ENCODE measurements at regions of chr1 and their contacts with region 1.

Region 1: DNA sequence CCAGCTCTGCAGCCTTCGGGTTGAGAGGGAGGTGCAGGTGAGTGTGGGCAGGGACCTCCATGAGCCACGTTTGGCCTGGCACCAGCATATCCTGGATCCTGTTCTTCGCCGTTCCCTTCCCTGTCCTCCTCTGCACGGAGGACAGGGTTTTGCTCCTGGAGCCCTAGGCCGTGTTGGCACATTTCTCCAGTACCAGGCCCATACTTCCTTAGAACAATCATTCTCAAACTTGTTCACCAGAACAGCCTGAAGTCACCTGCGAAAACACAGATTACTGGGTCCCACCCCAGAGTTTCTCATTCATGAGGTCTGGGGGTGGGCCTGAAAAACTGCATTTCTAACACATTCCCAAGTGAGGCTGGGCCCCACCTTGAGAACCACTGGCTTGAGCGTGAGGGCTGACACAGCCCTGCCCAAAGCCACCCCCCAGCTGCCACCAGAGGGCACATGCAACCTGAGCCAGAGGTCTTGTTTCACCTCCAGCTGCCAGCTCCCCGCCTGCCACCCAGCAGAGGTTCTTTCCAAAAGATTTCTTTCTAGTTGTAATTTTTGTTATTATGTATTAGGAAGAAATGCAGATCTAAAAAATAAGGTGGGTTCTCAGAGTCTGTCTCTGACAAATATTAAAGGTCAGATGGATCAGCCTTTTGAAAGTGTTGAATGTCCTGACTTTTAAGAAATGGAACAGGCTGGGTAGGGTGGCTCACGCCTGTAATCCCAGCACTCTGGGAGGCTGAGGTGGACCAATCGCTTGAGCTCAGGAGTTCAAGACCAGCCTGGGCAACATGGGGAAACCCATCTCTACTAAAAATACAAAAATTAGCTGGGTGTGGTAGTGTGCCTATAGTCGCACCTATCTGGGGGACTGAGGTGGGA is 39.6 kb upstream of the LDLRAP1 start:
- DNase-seq: peak; percentile 30 to 53
- ATAC-seq: peak; percentile 91 to 95
- H3K4me3 ChIP-seq: no peak overlapping the region
- H3K27ac ChIP-seq: no peak overlapping the region
- H3K4me1 ChIP-seq: peaks cover 25% of the 10 kb centered on the region
- CTCF ChIP-seq: peak; percentile 49; the same call in 2 of the 3 replicates
- EP300 ChIP-seq: no peak
- POLR2A ChIP-seq: no peak
- RAD21 ChIP-seq: peak; percentile 58

Region 2: GRCh38 chr1:25487628-25488027 is 16.2 kb before region 1 on chr1:
- CTCF ChIA-PET with region 1: interaction called, 10 read pairs
- POLR2A ChIA-PET with region 1: no interaction called
- DNase-seq: no peak
- ATAC-seq: no peak
- H3K4me3 ChIP-seq: no peak overlapping the region
- H3K27ac ChIP-seq: no peak overlapping the region
- H3K4me1 ChIP-seq: no peaks in the 10 kb centered on the region
- CTCF ChIP-seq: peak; percentile 33
- EP300 ChIP-seq: no peak
- POLR2A ChIP-seq: no peak
- RAD21 ChIP-seq: no peak

Measured in A549 (cell line).